BJ (cell line): ENCODE measurements at regions of chr17 and their contacts with region 1.

Region 1: DNA sequence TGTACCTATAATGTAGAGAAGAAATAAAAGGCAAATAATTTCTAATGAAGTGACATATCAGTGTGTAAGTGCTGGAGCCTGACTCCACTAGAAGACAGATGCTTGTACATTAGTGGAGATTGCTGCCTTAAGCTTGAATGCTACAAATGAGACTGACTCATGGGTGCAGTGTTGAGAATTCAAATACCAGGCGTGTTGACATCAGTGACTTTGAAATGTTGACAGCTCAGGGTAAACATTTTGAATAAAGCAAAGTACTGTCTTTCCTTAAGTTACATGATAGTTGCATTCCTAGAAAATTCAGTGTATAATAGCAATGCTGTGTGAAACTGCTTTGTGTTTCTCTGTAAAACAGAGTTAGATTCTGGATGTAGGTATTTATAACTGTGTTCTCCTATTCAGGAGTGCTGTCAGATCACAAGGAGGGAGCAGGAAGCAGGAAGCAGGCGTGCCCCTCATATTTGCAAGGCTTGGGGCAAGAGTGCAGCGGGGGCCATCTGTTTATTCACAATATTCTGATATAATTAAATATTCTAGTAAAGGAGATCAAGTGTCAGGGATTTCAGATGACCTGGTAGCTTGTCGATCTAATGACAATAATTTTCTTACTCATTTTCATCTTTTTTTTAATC is 119.0 kb downstream of the SPECC1 start:
- DNase-seq: peak; percentile 19
- H3K4me3 ChIP-seq: no peak overlapping the region
- H3K27me3 ChIP-seq: no peaks in the 10 kb centered on the region
- CTCF ChIP-seq: no peak

Region 2: DNA sequence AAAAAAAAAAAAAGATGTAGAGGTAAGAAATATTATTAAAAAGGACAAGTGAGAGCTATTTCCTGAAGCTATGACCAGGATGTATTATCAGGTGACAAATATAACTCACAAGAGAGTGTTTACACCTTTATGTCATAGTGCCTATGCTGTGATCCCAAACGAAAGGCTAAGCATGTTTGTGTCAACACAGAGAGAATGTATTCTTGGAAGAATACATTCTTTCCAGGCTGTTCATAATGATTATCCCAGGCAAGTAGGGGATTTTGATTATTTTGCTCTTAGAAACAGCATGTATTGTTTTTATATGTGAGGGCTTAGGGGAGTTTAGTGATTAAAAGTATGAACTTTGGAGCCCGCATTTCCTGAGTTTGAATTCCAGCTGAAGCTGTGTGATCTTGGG is 56.0 kb after region 1 on chr17:
- CTCF ChIA-PET with region 1: no interaction called
- POLR2A ChIA-PET with region 1: interaction called, 10 read pairs
- DNase-seq: no peak
- H3K4me3 ChIP-seq: no peak overlapping the region
- H3K27me3 ChIP-seq: no peaks in the 10 kb centered on the region
- CTCF ChIP-seq: no peak